ENCODE measurements at regions of chr10 and their contacts with region 1.

Region 1: GRCh38 chr10:29998142-29998808 is 61.1 kb downstream of the JCAD start:
- DNase-seq: peak; percentile 53 to 96 (median 74)

Region 2: DNA sequence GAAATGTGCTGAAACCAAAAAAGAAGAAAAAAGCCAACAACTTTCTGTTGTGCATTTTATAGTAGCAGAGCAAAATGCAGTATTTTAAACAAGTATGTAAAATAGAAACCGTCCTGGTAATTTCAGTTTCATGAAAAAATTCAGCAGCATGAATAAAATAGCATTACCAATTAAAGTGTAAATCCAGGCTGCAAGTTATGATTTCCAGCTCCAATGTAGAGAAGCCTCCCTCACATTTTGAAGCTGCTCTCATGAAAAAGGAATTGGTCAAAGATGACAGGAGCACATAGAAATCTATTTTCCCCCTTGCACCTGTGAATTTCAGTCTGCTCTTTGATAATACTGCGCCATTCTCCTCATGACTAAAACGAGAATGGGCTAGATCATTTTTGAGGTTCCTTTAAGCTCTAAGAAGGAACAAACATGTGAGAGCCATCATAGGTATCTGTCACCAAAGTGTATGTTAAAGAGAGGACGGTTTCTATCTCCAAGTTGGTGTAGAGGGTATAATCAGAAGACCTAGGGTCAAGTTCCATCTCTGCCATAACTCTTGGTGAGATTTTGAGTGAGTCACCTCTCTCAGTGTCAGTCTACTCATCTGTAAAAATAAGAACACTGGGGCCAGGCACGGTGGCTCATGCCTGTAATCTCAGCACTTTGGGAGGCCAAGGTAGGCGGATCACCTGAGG is 243.3 kb after region 1 on chr10:
- intact Hi-C with region 1: loop called (anchors 5 kb)
- DNase-seq: no peak

Region 3: DNA sequence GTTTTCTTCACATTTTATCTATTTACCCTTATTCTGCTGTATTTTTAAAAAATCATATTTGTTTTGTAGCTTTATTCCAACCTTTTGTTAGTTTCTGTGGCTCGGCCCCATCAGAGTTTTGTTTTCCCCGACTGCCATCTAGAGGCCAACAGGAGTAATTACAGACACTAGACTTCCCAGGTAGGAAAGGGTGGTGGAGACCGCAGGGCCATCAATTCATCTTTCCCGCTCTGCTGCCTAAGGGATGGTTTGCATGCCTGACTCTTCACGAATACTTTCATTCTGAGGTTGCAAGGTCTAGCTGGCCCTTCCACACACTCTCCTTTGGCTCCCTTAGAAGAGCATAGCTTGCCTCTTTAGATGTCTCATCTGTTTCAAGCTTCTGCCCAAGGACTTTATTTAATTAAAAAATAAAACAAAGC is 593.0 kb after region 1 on chr10:
- intact Hi-C with region 1: loop called (anchors 2 kb)
- DNase-seq: peak in 2 of 10 donors; percentile 22 to 34

Measured in posterior cingulate gyrus (tissue), 11 donors.